ENCODE measurements at regions of chr1 and their contacts with region 1.

Region 1: DNA sequence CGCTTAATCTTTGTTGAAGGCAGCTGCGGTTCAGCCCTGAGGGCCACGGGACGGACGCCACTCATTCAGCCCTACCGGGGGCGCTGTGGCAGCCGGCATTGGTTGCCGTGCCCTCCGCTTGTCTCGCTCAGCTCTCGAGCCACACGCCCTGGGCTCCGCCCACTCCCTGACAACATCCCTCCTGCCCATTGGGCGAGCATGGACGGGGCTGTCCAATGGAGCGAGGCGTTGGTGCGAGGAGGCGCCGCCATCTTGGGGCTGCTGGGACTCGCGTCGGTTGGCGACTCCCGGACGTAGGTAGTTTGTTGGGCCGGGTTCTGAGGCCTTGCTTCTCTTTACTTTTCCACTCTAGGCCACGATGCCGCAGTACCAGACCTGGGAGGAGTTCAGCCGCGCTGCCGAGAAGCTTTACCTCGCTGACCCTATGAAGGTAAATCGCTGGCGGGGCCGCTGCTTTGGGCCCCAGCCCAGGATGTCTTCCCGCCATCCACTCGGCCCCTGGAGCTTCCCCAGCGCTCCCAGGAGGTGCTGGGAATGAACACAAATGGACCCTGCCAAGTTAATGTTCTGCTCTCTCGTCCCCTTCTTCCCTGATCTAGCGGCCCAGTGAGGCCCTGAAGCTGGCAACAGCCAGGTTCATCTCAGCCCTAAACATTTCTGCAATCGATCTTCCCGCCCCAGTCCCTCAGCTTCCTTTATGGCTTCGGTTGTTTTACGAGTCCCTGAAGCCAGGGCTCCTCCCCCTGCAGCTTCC is at the start of gene SRP9:
- DNase-seq: peak; percentile 97
- ATAC-seq: peak; percentile 99
- H3K4me3 ChIP-seq: peak within 1 kb of the TSS; percentile 96 to 99 (median 97)
- H3K27ac ChIP-seq: peak within 1 kb of the TSS; percentile 97
- H3K4me1 ChIP-seq: peaks cover 65% of the 10 kb centered on the region
- H3K27me3 ChIP-seq: no peaks in the 10 kb centered on the region; a peak in 1 of 5 replicates
- CTCF ChIP-seq: peak; percentile 99
- EP300 ChIP-seq: peak in 1 of 2 experiments; percentile 14; a peak in 1 of 4 replicates
- POLR2A ChIP-seq: peak; percentile 58 to 81
- RAD21 ChIP-seq: peak; percentile 90
- total RNA-seq, gene SRP9: 251 and 524 TPM in 2 replicates

Region 2: DNA sequence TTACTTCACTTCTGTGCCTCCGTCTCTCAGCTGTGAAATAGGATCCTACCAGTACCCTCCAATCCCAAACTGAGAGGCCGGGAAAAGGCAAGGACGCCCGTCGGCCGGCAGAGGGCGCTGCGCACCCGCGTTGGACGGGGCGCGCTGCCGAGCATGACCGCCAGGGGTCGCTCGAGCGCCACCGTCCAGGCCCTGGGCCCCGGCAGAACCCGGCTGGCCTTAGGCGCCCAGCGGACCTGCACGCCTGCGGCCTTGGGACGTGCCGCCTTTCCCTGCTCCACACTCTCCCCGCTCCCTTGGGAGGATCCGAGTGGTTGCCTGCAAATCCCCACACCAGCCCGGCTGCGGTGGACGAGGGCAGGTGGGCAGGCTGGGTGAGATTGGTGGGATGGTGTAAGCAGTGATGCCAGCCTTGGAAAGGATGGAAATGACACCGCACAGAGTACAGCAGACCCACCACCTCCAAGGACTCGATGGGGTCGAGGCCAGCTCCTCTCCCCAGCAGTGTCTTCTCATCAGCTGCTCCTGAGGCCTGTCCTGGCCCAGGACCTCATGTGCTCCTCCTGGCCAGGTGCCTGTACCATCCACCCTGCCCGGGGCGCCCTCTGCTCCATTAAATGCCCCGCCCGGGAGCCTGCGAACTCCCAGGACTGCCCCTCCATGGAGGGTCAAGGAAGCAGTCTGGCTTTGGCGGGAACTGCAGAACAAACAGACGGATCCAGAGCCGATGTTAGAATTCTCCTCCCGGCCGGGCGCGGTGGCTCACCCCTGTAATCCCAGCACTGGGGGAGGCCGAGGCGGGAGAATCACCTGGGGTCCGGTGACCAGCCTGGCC is 302.6 kb before region 1 on chr1:
- CTCF ChIA-PET with region 1: interaction called, 32 read pairs
- POLR2A ChIA-PET with region 1: interaction called, 8 read pairs
- in situ Hi-C with region 1: loop called (anchors 5 kb)
- intact Hi-C with region 1: loop called (anchors 1 kb)
- DNase-seq: peak; percentile 54
- ATAC-seq: peak; percentile 86
- H3K4me3 ChIP-seq: peak overlapping the region; percentile 36 to 72 (median 48)
- H3K27ac ChIP-seq: no peak overlapping the region
- H3K4me1 ChIP-seq: peaks cover 42% of the 10 kb centered on the region
- H3K27me3 ChIP-seq: peaks cover 1 to 7% of the 10 kb centered on the region in 2 experiments; a peak in 2 of 5 replicates
- CTCF ChIP-seq: peak; percentile 100
- EP300 ChIP-seq: peak in 1 of 2 experiments; percentile 32; a peak in 1 of 4 replicates
- POLR2A ChIP-seq: no peak
- RAD21 ChIP-seq: peak; percentile 100

Region 3: DNA sequence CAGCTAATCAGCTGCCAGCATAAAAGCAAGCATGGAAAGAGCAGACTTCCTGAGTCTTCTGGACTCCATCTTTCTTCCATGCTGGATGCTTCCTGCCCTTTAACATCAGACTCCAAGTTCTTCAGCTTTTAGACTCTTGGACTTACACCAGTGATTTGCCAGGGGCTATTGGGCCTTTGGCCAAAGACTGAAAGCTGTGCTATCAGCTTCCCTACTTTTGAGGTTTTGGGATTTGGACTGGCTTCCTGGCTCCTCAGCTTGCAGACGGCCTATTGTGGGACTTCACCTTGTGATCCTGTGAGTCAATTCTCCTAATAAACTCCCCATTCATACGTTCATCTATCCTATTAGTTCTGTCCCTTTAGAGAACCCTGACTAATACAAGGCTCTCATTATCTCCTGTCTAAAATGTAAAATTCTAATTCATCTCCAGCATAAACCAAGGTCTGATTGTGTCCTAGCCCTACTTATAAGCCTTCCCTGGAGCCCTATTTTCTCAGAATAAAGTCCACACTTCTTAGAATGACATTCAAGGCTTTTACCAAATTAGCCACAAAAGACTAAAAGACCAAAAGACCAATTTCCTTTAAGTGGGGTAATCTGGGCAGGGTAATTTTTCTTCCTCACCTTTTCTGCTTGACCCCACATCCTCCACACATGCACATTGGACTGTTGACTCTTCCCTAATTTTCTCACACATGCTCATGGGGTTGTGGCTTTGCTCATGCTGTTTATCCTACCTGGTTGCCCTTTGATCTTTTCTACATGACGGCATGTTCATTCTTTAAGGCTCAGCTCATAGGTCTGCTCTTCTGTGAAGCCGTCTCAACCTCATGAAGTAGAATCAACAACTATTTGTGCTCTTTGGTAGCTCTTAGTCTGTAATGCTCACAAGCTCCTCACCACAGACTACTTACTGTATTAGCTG is 106.7 kb before region 1 on chr1:
- CTCF ChIA-PET with region 1: no interaction called
- POLR2A ChIA-PET with region 1: interaction called, 10 read pairs
- in situ Hi-C with region 1: no loop called
- intact Hi-C with region 1: no loop called
- DNase-seq: peak; percentile 97
- ATAC-seq: peak; percentile 96
- H3K4me3 ChIP-seq: peak overlapping the region in 1 of 3 experiments; percentile 30; a peak in 1 of 6 replicates
- H3K27ac ChIP-seq: peak overlapping the region; percentile 63
- H3K4me1 ChIP-seq: peaks cover 27% of the 10 kb centered on the region
- H3K27me3 ChIP-seq: no peaks in the 10 kb centered on the region
- CTCF ChIP-seq: no peak
- EP300 ChIP-seq: peak; percentile 27 to 86; a peak in 3 of 4 replicates
- POLR2A ChIP-seq: peak in 1 of 2 experiments; percentile 35; a peak in 1 of 4 replicates
- RAD21 ChIP-seq: no peak

Region 4: DNA sequence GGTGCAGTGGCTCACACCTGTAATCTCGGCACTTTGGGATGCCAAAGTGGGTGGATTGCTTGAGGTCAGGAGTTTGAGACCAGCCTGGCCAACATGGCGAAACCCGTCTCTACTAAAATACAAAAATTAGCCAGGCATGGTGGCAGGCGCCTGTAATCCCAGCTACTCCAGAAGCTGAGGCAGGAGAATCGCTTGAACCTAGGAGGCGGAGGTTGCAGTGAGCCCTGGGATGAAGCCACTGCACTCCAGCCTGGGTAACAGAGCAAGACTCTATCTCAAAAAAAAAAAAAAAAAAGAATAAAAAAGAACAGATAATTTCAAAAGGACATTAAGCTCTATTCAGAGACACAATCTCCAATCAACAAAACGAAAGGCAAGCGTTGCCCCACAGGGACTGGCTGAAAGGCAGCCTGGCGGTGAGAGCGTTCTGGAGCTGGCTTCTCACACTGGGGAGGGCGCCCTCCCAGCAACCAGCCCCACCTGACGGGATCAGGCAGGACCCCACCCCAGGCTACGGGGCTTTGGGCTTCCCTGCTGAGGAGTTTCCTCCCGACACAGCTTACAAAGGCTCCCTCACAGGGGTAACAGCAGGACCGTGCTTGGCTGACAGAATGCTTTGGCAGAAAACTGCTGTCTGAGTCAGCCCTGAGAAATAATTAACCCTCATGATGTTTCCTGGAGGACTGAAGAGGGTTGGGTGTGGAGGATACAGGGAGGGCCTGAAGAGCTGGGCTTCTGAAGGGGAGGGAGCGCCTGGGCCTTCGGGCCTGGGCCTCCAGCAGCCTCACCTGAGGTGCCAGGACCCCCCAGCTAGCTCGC is 31.2 kb before region 1 on chr1:
- CTCF ChIA-PET with region 1: no interaction called
- POLR2A ChIA-PET with region 1: interaction called, 13 read pairs
- in situ Hi-C with region 1: no loop called
- intact Hi-C with region 1: no loop called
- DNase-seq: peak; percentile 85
- ATAC-seq: peak; percentile 98
- H3K4me3 ChIP-seq: peak overlapping the region; percentile 65 to 72 (median 66); a peak in 5 of 6 replicates
- H3K27ac ChIP-seq: peak overlapping the region; percentile 60
- H3K4me1 ChIP-seq: peaks cover 52% of the 10 kb centered on the region
- H3K27me3 ChIP-seq: no peaks in the 10 kb centered on the region
- CTCF ChIP-seq: peak; percentile 39; the same call in 1 of the 2 replicates
- EP300 ChIP-seq: no peak
- POLR2A ChIP-seq: peak in 1 of 2 experiments; percentile 60; a peak in 2 of 4 replicates
- RAD21 ChIP-seq: no peak

Region 5: GRCh38 chr1:225809842-225810578 is 32.2 kb after region 1 on chr1 and contains the start of gene EPHX1:
- CTCF ChIA-PET with region 1: interaction called, 3 read pairs
- POLR2A ChIA-PET with region 1: interaction called, 87 read pairs
- in situ Hi-C with region 1: no loop called
- intact Hi-C with region 1: loop called (anchors 1 kb)
- DNase-seq: peak; percentile 76
- ATAC-seq: peak; percentile 79
- H3K4me3 ChIP-seq: peak within 1 kb of the TSS; percentile 68 to 87 (median 80)
- H3K27ac ChIP-seq: peak within 1 kb of the TSS; percentile 69
- H3K4me1 ChIP-seq: peaks cover 54% of the 10 kb centered on the region
- H3K27me3 ChIP-seq: no peaks in the 10 kb centered on the region
- CTCF ChIP-seq: peak; percentile 52
- EP300 ChIP-seq: no peak
- POLR2A ChIP-seq: peak; percentile 65 to 91
- RAD21 ChIP-seq: peak; percentile 49
- total RNA-seq, gene EPHX1: 28.8 and 36.5 TPM in 2 replicates

Region 6: GRCh38 chr1:225881969-225882693 is 104.4 kb after region 1 on chr1 and contains the start of gene TMEM63A:
- CTCF ChIA-PET with region 1: no interaction called
- POLR2A ChIA-PET with region 1: interaction called, 21 read pairs
- in situ Hi-C with region 1: no loop called
- intact Hi-C with region 1: no loop called
- DNase-seq: peak; percentile 82
- ATAC-seq: peak; percentile 79
- H3K4me3 ChIP-seq: peak within 1 kb of the TSS; percentile 91 to 98 (median 93)
- H3K27ac ChIP-seq: peak within 1 kb of the TSS; percentile 80
- H3K4me1 ChIP-seq: peaks cover 73% of the 10 kb centered on the region
- H3K27me3 ChIP-seq: no peaks in the 10 kb centered on the region; a peak in 1 of 5 replicates
- CTCF ChIP-seq: peak; percentile 62
- EP300 ChIP-seq: no peak
- POLR2A ChIP-seq: peak; percentile 58 to 82; a peak in 3 of 4 replicates
- RAD21 ChIP-seq: peak; percentile 70
- total RNA-seq, gene TMEM63A: 6.8 and 23.9 TPM in 2 replicates

Region 7: GRCh38 chr1:225977937-225978748 is 200.4 kb after region 1 on chr1:
- CTCF ChIA-PET with region 1: no interaction called
- POLR2A ChIA-PET with region 1: no interaction called
- in situ Hi-C with region 1: no loop called
- intact Hi-C with region 1: loop called (anchors 10 kb)
- DNase-seq: no peak
- ATAC-seq: no peak
- H3K4me3 ChIP-seq: no peak overlapping the region
- H3K27ac ChIP-seq: no peak overlapping the region
- H3K4me1 ChIP-seq: no peaks in the 10 kb centered on the region
- H3K27me3 ChIP-seq: no peaks in the 10 kb centered on the region
- CTCF ChIP-seq: no peak
- EP300 ChIP-seq: no peak
- POLR2A ChIP-seq: no peak
- RAD21 ChIP-seq: no peak

Measured in HepG2 (cell line).